Caco-2 (cell line): ENCODE measurements at regions of chr9 and their contacts with region 1.

Region 1: DNA sequence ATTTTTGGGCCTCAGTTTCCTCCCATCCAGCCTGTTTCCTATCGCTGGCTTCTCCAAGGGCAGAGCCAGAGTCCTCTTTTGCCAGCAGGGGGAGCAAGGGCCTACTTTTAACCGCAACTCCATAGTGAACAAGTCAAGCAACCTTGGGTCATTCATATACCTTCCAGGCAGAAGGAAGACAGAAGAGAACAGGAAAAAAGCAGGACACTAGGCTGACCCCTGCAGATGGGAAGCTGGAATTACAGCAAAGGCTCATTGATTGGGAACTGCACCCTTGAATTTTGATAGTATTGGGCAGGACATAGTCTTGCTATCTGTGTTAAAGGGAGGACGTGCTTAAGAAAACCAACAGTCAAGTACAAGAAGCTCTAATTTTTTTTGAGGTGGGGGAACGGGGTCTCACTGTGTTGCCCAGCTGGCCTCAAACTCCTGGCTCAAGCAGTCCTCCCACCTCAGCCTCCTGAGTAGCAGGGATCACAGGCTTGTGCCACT is 30.1 kb downstream of the QRFP start:
- DNase-seq: peak; percentile 90
- H3K4me3 ChIP-seq: no peak overlapping the region
- H3K4me3 Mint-ChIP-seq: no peak overlapping the region
- H3K27ac Mint-ChIP-seq: no peak overlapping the region
- H3K4me1 ChIP-seq: peaks cover 6% of the 10 kb centered on the region
- H3K4me1 Mint-ChIP-seq: no peaks in the 10 kb centered on the region
- H3K27me3 ChIP-seq: no peaks in the 10 kb centered on the region
- H3K27me3 Mint-ChIP-seq: no peaks in the 10 kb centered on the region
- CTCF ChIP-seq: peak; percentile 85 to 90

Region 2: GRCh38 chr9:130396581-130396980 is 469.9 kb before region 1 on chr9:
- CTCF ChIA-PET with region 1: no interaction called
- POLR2A ChIA-PET with region 1: no interaction called
- intact Hi-C with region 1: no loop called
- DNase-seq: no peak
- H3K4me3 ChIP-seq: no peak overlapping the region
- H3K4me3 Mint-ChIP-seq: no peak overlapping the region
- H3K27ac Mint-ChIP-seq: no peak overlapping the region
- H3K4me1 ChIP-seq: no peaks in the 10 kb centered on the region
- H3K4me1 Mint-ChIP-seq: no peaks in the 10 kb centered on the region
- H3K27me3 ChIP-seq: no peaks in the 10 kb centered on the region
- H3K27me3 Mint-ChIP-seq: no peaks in the 10 kb centered on the region
- CTCF ChIP-seq: no peak

Region 3: GRCh38 chr9:130693426-130694191 is 172.9 kb before region 1 on chr9 and contains the start of gene EXOSC2:
- CTCF ChIA-PET with region 1: interaction called, 13 read pairs
- POLR2A ChIA-PET with region 1: no interaction called
- intact Hi-C with region 1: no loop called
- DNase-seq: peak; percentile 91 to 99
- H3K4me3 ChIP-seq: peak within 1 kb of the TSS; percentile 70
- H3K4me3 Mint-ChIP-seq: peak within 1 kb of the TSS; percentile 95
- H3K27ac Mint-ChIP-seq: peak within 1 kb of the TSS; percentile 92
- H3K4me1 ChIP-seq: peaks cover 10% of the 10 kb centered on the region
- H3K4me1 Mint-ChIP-seq: peaks cover 16% of the 10 kb centered on the region
- H3K27me3 ChIP-seq: no peaks in the 10 kb centered on the region
- H3K27me3 Mint-ChIP-seq: no peaks in the 10 kb centered on the region
- CTCF ChIP-seq: no peak
- total RNA-seq, gene EXOSC2: 59.1 and 68.4 TPM in 2 replicates

Region 4: DNA sequence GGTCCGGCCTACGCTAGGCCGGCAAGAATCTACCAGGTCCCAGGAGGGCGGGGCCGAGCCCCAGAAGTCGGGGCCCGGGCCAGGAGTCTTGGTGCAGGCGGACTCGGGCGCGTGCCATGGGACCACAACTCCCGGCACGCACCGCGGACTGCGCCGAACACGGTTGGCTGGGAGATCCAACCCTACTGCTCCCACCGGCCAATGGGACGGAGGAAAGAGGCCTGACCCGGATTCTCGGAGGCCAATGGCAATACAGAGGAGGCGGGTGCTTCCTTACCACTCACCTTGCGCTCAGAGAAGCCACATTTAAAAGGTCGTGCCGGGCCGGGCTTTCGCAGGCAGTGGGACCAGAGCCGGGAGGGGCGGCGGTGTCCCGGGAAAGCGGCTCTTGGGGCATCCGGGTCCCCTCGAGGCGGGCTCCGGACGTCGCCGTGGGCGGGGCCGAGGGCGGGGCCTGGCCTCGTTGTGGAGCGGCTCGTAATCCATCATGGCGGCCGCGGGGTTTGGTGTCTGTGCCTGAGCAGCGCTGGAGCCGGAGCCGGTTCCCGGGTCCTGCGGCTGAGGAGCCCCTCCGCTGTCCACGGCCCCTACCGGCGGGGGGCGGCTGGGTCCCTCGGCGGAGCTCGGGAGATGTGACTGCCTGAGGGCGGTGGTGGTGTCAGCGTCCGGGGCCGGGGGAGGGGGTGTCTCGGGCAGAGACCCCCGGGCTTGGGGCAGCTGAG is 153.8 kb before region 1 on chr9:
- CTCF ChIA-PET with region 1: interaction called, 6 read pairs
- POLR2A ChIA-PET with region 1: no interaction called
- intact Hi-C with region 1: loop called (anchors 1 kb)
- DNase-seq: peak; percentile 98 to 99
- H3K4me3 ChIP-seq: peak overlapping the region; percentile 80
- H3K4me3 Mint-ChIP-seq: peak overlapping the region; percentile 96
- H3K27ac Mint-ChIP-seq: peak overlapping the region; percentile 96
- H3K4me1 ChIP-seq: peaks cover 22% of the 10 kb centered on the region
- H3K4me1 Mint-ChIP-seq: peaks cover 8% of the 10 kb centered on the region
- H3K27me3 ChIP-seq: no peaks in the 10 kb centered on the region
- H3K27me3 Mint-ChIP-seq: no peaks in the 10 kb centered on the region
- CTCF ChIP-seq: no peak

Region 5: GRCh38 chr9:130940693-130941576 is 74.4 kb after region 1 on chr9:
- CTCF ChIA-PET with region 1: interaction called, 11 read pairs
- POLR2A ChIA-PET with region 1: no interaction called
- intact Hi-C with region 1: loop called (anchors 1 kb)
- DNase-seq: peak; percentile 92 to 94
- H3K4me3 ChIP-seq: no peak overlapping the region
- H3K4me3 Mint-ChIP-seq: peak overlapping the region; percentile 47
- H3K27ac Mint-ChIP-seq: no peak overlapping the region
- H3K4me1 ChIP-seq: peaks cover 29% of the 10 kb centered on the region
- H3K4me1 Mint-ChIP-seq: peaks cover 14% of the 10 kb centered on the region
- H3K27me3 ChIP-seq: peaks cover 1% of the 10 kb centered on the region; the same call in 1 of the 2 replicates
- H3K27me3 Mint-ChIP-seq: peaks cover 28% of the 10 kb centered on the region
- CTCF ChIP-seq: peak; percentile 91 to 92

Region 6: GRCh38 chr9:131046581-131047202 is 180.2 kb after region 1 on chr9:
- CTCF ChIA-PET with region 1: interaction called, 5 read pairs
- POLR2A ChIA-PET with region 1: no interaction called
- intact Hi-C with region 1: loop called (anchors 1 kb)
- DNase-seq: peak; percentile 61 to 81
- H3K4me3 ChIP-seq: no peak overlapping the region
- H3K4me3 Mint-ChIP-seq: no peak overlapping the region
- H3K27ac Mint-ChIP-seq: no peak overlapping the region
- H3K4me1 ChIP-seq: no peaks in the 10 kb centered on the region
- H3K4me1 Mint-ChIP-seq: no peaks in the 10 kb centered on the region
- H3K27me3 ChIP-seq: no peaks in the 10 kb centered on the region
- H3K27me3 Mint-ChIP-seq: no peaks in the 10 kb centered on the region
- CTCF ChIP-seq: peak; percentile 92 to 95